ENCODE measurements at regions of chr9 and their contacts with region 1.

Region 1: GRCh38 chr9:69971643-69972449 is 71.8 kb upstream of the MAMDC2 start:
- DNase-seq: peak; percentile 75
- ATAC-seq: peak; percentile 39
- H3K4me3 Mint-ChIP-seq: no peak overlapping the region
- H3K27ac Mint-ChIP-seq: no peak overlapping the region
- H3K4me1 Mint-ChIP-seq: no peaks in the 10 kb centered on the region
- H3K27me3 Mint-ChIP-seq: peaks cover 16% of the 10 kb centered on the region

Region 2: DNA sequence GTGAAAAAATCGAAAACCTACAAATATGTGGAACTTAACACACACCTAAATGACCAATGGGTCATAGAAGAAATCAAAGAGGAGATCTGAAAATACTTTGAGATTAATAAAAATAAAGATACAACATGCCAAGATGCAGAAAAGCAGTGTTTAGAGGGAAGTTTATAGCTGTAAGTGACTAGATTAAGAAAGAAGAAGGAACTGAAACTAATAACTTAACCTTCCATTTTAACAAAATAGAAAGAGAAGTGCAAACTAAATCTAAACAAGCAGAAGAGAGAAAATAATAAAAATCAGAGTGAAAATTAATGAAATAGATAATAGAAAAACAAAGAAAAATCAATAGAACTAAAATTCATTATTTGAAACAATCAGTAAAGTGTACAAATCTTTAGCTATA is 31.2 kb before region 1 on chr9:
- CTCF ChIA-PET with region 1: no interaction called
- POLR2A ChIA-PET with region 1: no interaction called
- intact Hi-C with region 1: no loop called
- DNase-seq: no peak
- ATAC-seq: no peak
- H3K4me3 Mint-ChIP-seq: no peak overlapping the region
- H3K27ac Mint-ChIP-seq: no peak overlapping the region
- H3K4me1 Mint-ChIP-seq: no peaks in the 10 kb centered on the region
- H3K27me3 Mint-ChIP-seq: peaks cover 19% of the 10 kb centered on the region

Region 3: GRCh38 chr9:70229579-70229978 is 257.7 kb after region 1 on chr9:
- CTCF ChIA-PET with region 1: interaction called, 5 read pairs
- POLR2A ChIA-PET with region 1: no interaction called
- intact Hi-C with region 1: loop called (anchors 1 to 5 kb)
- DNase-seq: no peak
- ATAC-seq: no peak
- H3K4me3 Mint-ChIP-seq: no peak overlapping the region
- H3K27ac Mint-ChIP-seq: no peak overlapping the region
- H3K4me1 Mint-ChIP-seq: no peaks in the 10 kb centered on the region
- H3K27me3 Mint-ChIP-seq: no peaks in the 10 kb centered on the region

Region 4: GRCh38 chr9:70451765-70452164 is 479.9 kb after region 1 on chr9:
- CTCF ChIA-PET with region 1: no interaction called
- POLR2A ChIA-PET with region 1: no interaction called
- intact Hi-C with region 1: no loop called
- DNase-seq: no peak
- ATAC-seq: no peak
- H3K4me3 Mint-ChIP-seq: no peak overlapping the region
- H3K27ac Mint-ChIP-seq: no peak overlapping the region
- H3K4me1 Mint-ChIP-seq: no peaks in the 10 kb centered on the region
- H3K27me3 Mint-ChIP-seq: no peaks in the 10 kb centered on the region